ENCODE measurements at regions of chr2 and their contacts with region 1.

Region 1: DNA sequence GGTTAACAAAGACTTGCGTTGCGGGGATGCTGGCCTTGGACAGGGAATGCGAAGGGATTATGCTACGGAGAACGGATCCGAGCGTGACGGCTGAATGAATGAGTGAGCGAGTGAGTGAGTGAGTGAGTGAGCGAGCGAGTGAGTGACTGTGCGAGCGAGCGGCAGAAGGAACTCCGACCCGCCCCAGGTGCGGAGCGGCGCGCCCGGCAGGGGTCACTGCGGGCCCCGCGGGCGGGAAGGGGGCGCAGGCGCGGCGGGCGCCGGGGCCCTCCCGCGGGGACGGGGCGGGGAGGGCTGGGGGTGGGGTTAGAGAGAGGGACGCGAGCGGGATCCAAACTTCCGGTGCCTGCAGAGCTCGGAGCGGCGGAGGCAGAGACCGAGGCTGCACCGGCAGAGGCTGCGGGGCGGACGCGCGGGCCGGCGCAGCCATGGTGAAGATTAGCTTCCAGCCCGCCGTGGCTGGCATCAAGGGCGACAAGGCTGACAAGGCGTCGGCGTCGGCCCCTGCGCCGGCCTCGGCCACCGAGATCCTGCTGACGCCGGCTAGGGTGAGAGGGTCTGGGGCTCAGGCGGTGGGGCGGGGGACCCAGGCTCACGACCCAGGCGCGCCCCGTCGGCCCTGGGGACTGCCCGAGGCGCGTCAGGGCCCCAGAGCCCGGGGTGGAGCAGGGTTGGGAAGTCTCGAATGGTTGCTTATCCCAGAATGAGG is at the start of gene ITM2C:
- DNase-seq: peak in 1 of 2 experiments; percentile 79
- H3K4me3 ChIP-seq: peak within 1 kb of the TSS; percentile 75 to 99 (median 84)
- H3K27ac ChIP-seq: peak within 1 kb of the TSS; percentile 82
- H3K4me1 ChIP-seq: peaks cover 12 to 56% (median 41%) of the 10 kb centered on the region in 4 experiments
- H3K27me3 ChIP-seq: no peaks in the 10 kb centered on the region; a peak in 1 of 7 replicates
- CTCF ChIP-seq: peak in 1 of 3 experiments; percentile 34; a peak in 2 of 4 replicates
- EP300 ChIP-seq: no peak
- POLR2A ChIP-seq: peak in 1 of 2 experiments; percentile 80; a peak in 2 of 3 replicates
- RAD21 ChIP-seq: no peak; a peak in 1 of 4 replicates
- total RNA-seq, gene ITM2C: 362 and 367 TPM in 2 replicates

Region 2: GRCh38 chr2:230824406-230824978 is 40.3 kb before region 1 on chr2:
- CTCF ChIA-PET with region 1: interaction called, 10 read pairs
- POLR2A ChIA-PET with region 1: interaction called, 5 read pairs
- DNase-seq: peak; percentile 60 to 66
- H3K4me3 ChIP-seq: no peak overlapping the region
- H3K27ac ChIP-seq: no peak overlapping the region
- H3K4me1 ChIP-seq: peaks cover 0 to 6% (median 2%) of the 10 kb centered on the region in 4 experiments; a peak in 4 of 7 replicates
- H3K27me3 ChIP-seq: no peaks in the 10 kb centered on the region; a peak in 2 of 7 replicates
- CTCF ChIP-seq: peak; percentile 8 to 90 (median 72)
- EP300 ChIP-seq: no peak
- POLR2A ChIP-seq: no peak
- RAD21 ChIP-seq: peak; percentile 92

Region 3: DNA sequence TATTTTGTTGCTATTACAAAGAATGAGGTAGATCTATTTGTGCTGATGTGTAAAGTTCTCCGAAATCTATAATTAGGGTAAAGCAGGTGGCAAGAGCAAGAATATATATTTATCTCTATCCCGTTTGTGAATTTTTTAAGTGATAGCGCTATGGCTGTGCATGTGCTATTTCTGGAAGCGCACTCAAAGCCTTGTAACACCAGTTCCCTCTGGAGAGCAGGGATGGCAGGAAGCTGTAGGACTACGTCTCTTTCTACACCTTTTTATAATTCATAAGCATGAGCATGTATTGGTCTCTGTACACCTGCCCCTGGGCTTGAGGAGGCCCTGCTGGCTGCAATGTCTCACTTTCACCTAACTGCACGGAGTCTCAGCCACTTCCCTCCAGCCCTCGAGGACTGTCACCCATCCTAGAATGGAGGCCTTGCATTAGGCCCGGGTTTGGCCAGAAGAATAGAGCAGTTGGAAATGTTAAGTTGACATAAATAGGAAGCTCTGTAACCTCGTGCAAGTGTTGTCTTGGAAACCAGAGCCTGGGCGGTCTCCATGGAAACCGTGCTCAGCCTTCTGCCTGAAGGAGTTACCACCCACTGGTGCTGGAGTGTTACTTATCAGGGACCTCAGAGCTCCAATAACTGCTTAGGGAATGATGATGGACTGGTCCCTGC is 20.8 kb after region 1 on chr2:
- CTCF ChIA-PET with region 1: interaction called, 8 read pairs
- POLR2A ChIA-PET with region 1: interaction called, 12 read pairs
- DNase-seq: peak in 1 of 2 experiments; percentile 68
- H3K4me3 ChIP-seq: no peak overlapping the region
- H3K27ac ChIP-seq: no peak overlapping the region
- H3K4me1 ChIP-seq: peaks cover 5 to 9% (median 7%) of the 10 kb centered on the region in 4 experiments
- H3K27me3 ChIP-seq: no peaks in the 10 kb centered on the region
- CTCF ChIP-seq: no peak
- EP300 ChIP-seq: no peak
- POLR2A ChIP-seq: no peak
- RAD21 ChIP-seq: no peak

Region 4: GRCh38 chr2:230893841-230894781 is 29.4 kb after region 1 on chr2:
- CTCF ChIA-PET with region 1: interaction called, 4 read pairs
- POLR2A ChIA-PET with region 1: interaction called, 32 read pairs
- DNase-seq: no peak
- H3K4me3 ChIP-seq: no peak overlapping the region
- H3K27ac ChIP-seq: no peak overlapping the region
- H3K4me1 ChIP-seq: peaks cover 0 to 12% (median 2%) of the 10 kb centered on the region in 4 experiments; a peak in 2 of 7 replicates
- H3K27me3 ChIP-seq: no peaks in the 10 kb centered on the region
- CTCF ChIP-seq: no peak
- EP300 ChIP-seq: no peak
- POLR2A ChIP-seq: no peak
- RAD21 ChIP-seq: no peak